Ascending aorta (tissue), 2 donors: ENCODE measurements at regions of chr4 and their contacts with region 1.

Region 1: DNA sequence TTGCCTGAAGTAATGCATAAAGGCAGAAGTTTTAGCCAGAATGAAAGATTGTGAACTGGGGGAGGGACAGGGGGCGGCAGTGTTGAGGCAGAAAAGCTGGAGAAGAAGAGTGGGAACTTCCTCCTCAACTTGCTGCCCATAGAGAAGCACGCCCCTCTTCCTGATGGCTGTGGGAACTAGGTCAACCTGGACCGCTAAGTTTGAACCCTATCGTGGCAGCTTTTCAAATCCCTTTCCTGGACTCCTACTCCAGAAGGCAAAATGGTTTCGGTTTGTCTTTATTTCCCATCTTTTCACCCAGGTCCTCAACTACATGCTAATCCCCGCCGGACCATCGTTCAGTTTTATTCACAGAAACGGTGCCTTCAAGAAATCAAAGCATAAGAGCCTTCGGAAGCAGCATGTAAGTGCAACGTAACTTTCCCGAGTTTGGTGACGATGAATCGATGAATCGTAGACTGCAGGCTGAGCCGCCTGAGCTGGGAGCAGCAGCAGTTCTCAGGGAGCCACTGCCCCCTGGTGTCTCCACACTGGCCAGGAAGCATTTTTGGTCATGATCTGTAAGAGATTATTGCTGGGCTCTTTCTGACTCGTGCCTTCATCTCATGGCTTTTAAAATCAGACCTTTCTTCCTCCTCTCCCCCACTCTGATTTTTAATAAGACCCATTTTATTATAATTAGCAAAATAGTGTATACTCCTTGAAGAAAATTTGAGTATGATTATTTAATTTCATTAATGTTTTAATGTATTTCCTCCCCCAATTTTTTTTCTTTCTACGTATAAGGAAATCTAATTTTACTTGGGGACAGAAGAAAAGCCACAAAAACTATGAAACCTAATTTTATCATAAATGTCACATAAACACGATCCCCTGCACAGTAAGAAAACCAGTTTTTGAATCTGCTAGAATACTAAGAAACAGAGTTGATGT is 21.4 kb downstream of the SPINK2 start:
- DNase-seq: peak; percentile 37 to 89
- H3K4me3 ChIP-seq: peak overlapping the region; percentile 69 to 81
- H3K27ac ChIP-seq: peak overlapping the region; percentile 69 to 74
- H3K4me1 ChIP-seq: peaks cover 0 to 3% of the 10 kb centered on the region in 2 donors
- H3K27me3 ChIP-seq: no peaks in the 10 kb centered on the region
- CTCF ChIP-seq: peak; percentile 81 to 88 (median 83)

Region 2: DNA sequence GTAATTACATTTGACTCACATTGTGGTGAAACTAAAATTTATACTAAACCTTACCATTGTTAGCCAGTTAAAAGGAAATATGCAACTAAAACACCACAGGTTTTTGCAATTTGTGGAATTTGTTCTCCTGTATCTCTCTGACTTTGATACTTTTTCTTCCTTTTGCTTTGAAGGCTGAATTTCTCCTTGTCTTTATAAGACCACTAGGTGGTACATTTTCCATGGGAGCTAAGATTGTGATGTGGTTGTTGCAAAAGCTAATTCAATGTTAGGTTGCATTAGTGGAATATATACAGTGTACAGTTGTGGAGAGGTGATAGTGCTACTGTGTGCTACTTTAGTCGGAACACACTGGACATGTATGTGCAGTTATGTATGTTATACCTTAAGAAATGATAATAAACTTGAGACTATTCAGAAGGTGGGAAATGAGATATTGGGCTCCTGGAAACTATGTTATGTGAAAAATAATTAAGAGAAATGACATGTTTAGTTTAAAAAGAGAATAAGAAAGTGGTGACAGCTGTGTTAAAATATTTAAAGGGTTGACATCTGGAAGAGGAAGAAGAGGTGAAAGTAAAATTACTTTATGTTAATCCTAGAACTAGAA is 224.2 kb before region 1 on chr4:
- intact Hi-C with region 1: loop called (anchors 5 kb)
- DNase-seq: no peak
- H3K4me3 ChIP-seq: no peak overlapping the region
- H3K27ac ChIP-seq: no peak overlapping the region
- H3K4me1 ChIP-seq: no peaks in the 10 kb centered on the region
- H3K27me3 ChIP-seq: no peaks in the 10 kb centered on the region
- CTCF ChIP-seq: peak in 2 of 3 experiments; percentile 19 to 45

Region 3: DNA sequence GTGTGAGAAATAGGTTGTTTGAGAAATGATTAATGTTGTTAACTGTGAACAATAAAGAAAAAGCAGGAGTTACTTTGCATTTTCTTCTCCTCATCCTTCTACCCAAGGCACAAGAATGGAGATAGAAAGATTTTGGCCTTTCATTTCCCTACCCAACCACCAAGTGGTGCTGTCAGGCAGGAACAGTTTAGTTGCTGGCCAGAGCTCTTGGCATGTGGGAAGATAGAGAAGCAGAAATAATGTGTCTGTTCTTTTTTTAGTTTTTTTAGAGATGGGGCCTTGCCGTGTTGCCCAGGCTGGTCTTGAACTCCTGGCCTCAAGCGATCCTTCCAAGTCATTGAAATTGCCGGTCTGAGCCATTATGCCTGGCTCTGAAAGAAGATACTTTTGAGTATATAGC is 131.8 kb before region 1 on chr4:
- intact Hi-C with region 1: loop called (anchors 2 kb)
- DNase-seq: no peak
- H3K4me3 ChIP-seq: no peak overlapping the region
- H3K27ac ChIP-seq: no peak overlapping the region
- H3K4me1 ChIP-seq: no peaks in the 10 kb centered on the region
- H3K27me3 ChIP-seq: no peaks in the 10 kb centered on the region
- CTCF ChIP-seq: no peak